ENCODE measurements at regions of chr11 and their contacts with region 1.

Region 1: DNA sequence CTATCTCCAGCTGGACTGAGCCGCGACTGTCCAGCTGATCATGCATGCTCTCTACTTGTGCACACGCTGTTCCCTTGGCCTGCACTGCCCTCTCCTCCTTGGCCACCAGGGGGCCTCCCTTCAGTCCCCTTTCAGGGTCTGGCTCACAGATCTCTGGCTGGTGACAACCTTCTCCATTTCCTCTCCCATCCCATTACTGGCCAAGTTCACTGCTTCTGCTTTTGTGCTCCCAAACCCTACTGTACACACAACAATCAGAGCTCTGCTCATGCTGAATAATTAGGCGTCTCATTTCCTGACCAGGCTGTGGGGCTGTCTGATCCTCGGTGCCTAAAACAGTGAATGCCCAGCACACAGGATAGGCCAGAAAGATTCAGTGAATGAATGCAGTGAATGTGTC is 224.0 kb upstream of the NARS2 start:
- DNase-seq: no peak
- H3K4me3 ChIP-seq: no peak overlapping the region
- CTCF ChIP-seq: peak; percentile 93

Region 2: GRCh38 chr11:78784321-78785061 is 14.2 kb before region 1 on chr11:
- CTCF ChIA-PET with region 1: interaction called, 48 read pairs
- POLR2A ChIA-PET with region 1: no interaction called
- DNase-seq: peak; percentile 37
- H3K4me3 ChIP-seq: no peak overlapping the region
- CTCF ChIP-seq: no peak

Region 3: GRCh38 chr11:78812513-78813293 is 14.0 kb after region 1 on chr11:
- CTCF ChIA-PET with region 1: interaction called, 113 read pairs
- POLR2A ChIA-PET with region 1: interaction called, 8 read pairs
- DNase-seq: no peak
- H3K4me3 ChIP-seq: no peak overlapping the region
- CTCF ChIP-seq: peak; percentile 5

Region 4: DNA sequence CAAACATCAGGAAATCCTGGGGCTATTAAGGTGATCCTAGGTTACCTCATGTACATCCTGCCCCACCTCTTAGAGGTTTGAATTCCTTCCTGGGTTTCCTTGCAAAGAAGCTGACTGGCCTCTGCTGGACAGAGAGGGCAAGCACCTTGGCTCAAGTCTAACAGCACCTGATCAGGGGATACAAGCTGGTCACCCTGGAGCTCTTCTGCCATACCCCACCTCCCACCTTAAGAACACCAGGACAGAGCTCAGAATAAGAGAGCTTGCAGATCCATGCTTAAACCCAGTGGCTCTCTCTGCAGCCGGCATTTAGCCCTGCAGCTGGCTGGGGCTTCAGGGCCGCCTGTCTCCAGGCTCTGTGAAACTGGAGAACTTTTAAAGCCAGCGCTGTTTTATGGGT is 162.6 kb after region 1 on chr11:
- CTCF ChIA-PET with region 1: interaction called, 14 read pairs
- POLR2A ChIA-PET with region 1: no interaction called
- DNase-seq: no peak
- H3K4me3 ChIP-seq: no peak overlapping the region
- CTCF ChIP-seq: peak; percentile 51